AG04450 (cell line): ENCODE measurements at regions of chr7 and their contacts with region 1.

Region 1: DNA sequence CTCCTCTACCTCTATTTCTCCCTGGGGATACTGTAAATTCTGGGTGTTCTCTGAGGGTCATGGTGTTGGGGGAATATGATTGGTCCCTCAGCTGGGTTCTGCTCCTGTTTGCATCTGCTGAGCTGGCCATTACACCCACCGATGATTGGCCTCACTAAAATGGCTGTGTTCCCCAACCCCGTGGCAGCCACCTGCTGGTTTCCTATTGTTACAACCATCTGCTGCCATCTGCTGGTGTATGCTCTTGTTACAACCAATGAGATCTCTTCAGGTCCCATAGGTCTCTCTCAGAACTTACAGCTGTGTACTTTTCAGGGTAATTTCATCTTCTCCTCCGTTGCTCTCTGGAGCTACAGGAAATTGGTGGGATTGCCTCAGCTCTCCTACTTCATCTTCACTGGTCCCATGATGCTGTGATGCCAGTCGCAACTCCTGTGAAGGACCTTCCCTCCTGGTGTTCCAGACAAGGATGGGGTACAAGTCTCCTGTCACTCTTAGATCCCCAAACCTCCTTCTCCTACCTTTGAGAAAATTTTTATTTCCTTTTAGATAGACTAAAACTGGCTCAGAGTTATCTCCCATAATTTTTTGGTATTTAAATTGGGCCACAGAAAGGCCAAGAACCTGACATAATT is 303.5 kb upstream of the SMIM30 start:
- DNase-seq: peak; percentile 69
- H3K4me3 ChIP-seq: no peak overlapping the region
- H3K27ac ChIP-seq: no peak overlapping the region
- H3K27me3 ChIP-seq: no peaks in the 10 kb centered on the region
- CTCF ChIP-seq: peak; percentile 91

Region 2: GRCh38 chr7:112550468-112551060 is 871.2 kb before region 1 on chr7:
- CTCF ChIA-PET with region 1: interaction called, 22 read pairs
- POLR2A ChIA-PET with region 1: no interaction called
- DNase-seq: peak; percentile 24
- H3K4me3 ChIP-seq: no peak overlapping the region
- H3K27ac ChIP-seq: no peak overlapping the region
- H3K27me3 ChIP-seq: no peaks in the 10 kb centered on the region
- CTCF ChIP-seq: peak; percentile 98

Region 3: DNA sequence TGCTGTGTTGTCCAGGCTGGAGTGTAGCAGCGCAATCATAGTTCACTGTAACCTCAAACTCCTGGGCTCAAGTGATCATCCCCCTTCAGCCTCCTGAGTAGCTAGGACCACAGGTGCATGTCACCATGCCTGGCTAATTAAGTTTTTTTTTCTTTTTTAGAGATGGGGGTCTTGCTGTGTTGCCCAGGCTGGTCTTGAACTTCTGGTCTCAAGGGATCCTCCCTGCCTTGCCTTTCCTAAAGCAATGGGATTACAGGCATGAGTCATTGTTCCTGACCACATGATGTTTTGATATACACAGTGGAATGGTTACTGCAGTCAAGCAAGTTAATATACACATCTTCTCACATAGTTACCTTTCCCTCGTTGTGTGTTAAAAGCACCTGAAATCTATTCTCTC is 475.5 kb before region 1 on chr7:
- CTCF ChIA-PET with region 1: no interaction called
- POLR2A ChIA-PET with region 1: no interaction called
- DNase-seq: no peak
- H3K4me3 ChIP-seq: no peak overlapping the region
- H3K27ac ChIP-seq: no peak overlapping the region
- H3K27me3 ChIP-seq: no peaks in the 10 kb centered on the region
- CTCF ChIP-seq: no peak

Region 4: DNA sequence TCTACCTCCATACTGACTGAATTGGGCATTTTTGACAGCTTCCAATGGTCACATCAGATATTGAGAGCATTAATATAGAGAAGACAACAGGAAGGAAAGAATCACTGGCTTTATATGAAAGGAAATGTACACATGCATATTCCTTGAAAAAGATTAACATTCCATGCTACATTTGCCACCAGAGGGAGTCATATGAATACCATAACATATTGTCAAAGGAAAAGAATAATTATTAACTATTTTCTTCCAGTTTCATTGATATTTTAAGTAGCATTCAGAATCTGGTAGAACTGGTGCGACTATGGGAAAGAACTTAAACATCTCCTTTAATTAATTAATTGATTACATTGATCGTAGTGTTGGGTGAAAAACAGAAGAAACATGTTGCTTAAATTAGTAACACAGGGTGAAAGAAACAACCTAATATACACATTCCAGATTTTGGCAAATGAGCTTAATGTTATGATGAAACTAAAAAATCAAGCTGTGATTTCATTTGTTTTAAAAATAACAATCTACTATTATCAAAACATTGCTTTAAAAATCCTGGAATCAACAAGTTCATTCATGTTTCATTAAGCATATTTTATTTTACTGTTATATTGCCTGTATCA is 406.7 kb before region 1 on chr7:
- CTCF ChIA-PET with region 1: interaction called, 66 read pairs
- POLR2A ChIA-PET with region 1: no interaction called
- DNase-seq: no peak
- H3K4me3 ChIP-seq: no peak overlapping the region
- H3K27ac ChIP-seq: no peak overlapping the region
- H3K27me3 ChIP-seq: no peaks in the 10 kb centered on the region
- CTCF ChIP-seq: peak; percentile 60

Region 5: DNA sequence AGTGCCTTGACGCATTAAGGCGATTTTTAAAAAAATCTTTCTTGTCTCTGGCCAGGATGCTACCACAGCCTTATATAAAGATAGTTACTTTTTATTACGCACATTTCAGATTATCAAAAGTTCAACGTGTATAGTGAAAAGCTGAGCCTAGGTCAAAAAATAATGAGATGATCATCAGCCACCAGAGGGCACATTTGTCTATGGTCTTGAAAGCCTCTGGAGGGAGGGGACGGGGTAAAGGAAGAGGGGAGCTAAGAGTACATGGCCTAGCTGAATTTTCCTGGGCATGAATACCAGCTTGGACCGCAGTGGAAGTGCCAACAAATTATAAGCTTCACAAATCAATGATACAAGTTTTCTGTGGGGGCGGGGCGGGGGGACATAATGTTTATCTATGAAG is 17.6 kb before region 1 on chr7:
- CTCF ChIA-PET with region 1: interaction called, 11 read pairs
- POLR2A ChIA-PET with region 1: no interaction called
- DNase-seq: no peak
- H3K4me3 ChIP-seq: no peak overlapping the region
- H3K27ac ChIP-seq: no peak overlapping the region
- H3K27me3 ChIP-seq: no peaks in the 10 kb centered on the region
- CTCF ChIP-seq: peak; percentile 18; the same call in 1 of the 2 replicates

Region 6: GRCh38 chr7:113664867-113665266 is 243.1 kb after region 1 on chr7:
- CTCF ChIA-PET with region 1: no interaction called
- POLR2A ChIA-PET with region 1: no interaction called
- DNase-seq: no peak
- H3K4me3 ChIP-seq: no peak overlapping the region
- H3K27ac ChIP-seq: no peak overlapping the region
- H3K27me3 ChIP-seq: no peaks in the 10 kb centered on the region
- CTCF ChIP-seq: no peak